Right cardiac atrium (tissue), 5 donors: ENCODE measurements at regions of chr10 and their contacts with region 1.

Region 1: DNA sequence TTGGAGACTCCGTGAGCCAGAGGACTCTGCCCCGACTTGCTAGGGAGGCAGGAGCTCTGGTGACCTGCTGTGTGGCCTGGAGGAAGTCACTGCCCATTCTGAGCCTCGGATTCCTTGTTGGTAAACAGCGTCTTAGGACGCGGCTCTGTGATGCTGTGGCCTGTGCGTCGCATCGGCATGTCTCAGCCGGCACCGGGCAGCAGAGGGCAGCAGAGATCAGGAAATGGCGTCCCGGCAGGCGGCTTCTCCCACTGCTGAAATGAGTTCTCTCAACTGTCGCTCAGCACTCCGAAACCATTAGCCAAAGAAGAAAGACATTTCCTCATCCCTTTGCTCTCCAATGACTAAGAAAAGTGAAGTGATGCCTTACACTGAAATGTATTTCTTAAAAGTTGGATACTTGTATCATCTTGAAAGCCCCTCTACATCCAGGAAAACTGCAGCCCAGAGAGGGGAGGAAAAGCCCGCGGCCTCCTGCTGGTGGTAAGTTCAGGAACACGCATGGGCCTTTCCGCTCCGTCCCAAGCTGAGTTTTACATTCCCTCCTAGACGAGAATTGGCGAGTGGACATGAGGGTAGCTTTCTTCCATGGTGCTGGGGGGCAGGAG is 91.7 kb downstream of the WDR11 start:
- DNase-seq: peak; percentile 81 to 92 (median 92)
- ATAC-seq: peak; percentile 85 to 91
- H3K4me3 ChIP-seq: no peak overlapping the region
- H3K27ac ChIP-seq: no peak overlapping the region
- H3K4me1 ChIP-seq: no peaks in the 10 kb centered on the region
- H3K27me3 ChIP-seq: no peaks in the 10 kb centered on the region

Region 2: DNA sequence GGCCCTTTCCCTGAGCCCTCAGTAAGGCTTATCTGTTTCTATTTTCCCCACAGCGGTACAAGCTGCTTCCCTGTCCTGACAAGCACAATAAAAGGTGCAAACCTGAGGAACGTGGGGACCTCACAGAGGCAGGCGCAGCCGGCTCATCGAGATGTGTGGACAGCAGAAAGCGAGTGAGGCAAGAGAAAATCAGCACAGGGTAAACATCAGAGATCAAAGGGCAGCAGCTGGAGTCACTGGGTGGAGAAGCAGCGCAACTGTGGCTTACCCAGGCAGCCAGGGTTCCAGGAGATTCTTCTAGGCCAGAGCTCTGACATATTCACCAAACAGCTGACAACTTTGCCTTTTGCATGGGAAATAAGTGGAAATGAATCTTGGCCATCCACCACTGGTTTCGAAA is 120.8 kb after region 1 on chr10:
- intact Hi-C with region 1: no loop called
- DNase-seq: no peak
- ATAC-seq: no peak
- H3K4me3 ChIP-seq: no peak overlapping the region
- H3K27ac ChIP-seq: no peak overlapping the region
- H3K4me1 ChIP-seq: no peaks in the 10 kb centered on the region
- H3K27me3 ChIP-seq: no peaks in the 10 kb centered on the region

Region 3: DNA sequence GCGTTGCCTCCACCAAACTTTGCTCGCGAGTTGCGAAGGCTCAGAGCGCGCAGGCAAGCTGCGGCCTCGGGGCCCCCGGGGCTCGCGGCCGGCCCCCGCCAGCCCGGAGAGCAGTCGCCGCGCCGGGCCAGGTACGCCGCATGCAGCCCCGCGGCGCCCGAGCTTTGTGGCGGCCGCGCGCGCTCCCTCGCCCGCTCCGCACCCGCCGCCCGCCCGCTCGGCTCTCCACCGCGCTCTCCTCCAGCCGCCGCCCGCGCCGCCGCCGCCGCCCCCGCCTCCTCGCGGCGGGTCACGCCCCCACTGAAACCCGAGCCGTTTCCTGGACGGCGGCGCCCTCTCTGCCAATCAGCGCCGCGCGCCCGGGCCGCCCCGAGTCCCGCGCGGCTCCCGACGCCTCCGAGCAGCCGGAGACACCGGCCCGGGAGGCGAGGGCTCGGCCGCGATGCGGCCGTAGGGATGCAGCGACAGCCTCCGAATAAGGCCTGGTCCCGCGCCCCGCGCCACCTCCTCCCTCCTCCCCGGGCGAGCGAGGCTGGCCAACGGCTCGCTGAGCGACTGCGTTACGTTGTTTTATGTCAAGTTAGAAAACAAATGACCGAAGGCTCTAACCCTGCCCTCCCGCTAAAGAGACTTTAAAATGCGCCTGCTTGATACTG is 655.4 kb after region 1 on chr10 and contains the start of gene FGFR2:
- intact Hi-C with region 1: loop called in 2 of 4 experiments (anchors 5 to 10 kb)
- DNase-seq: peak; percentile 84 to 93 (median 91)
- ATAC-seq: peak; percentile 96 to 98
- H3K4me3 ChIP-seq: peak within 1 kb of the TSS; percentile 44
- H3K27ac ChIP-seq: peak within 1 kb of the TSS; percentile 78
- H3K4me1 ChIP-seq: peaks cover 3% of the 10 kb centered on the region
- H3K27me3 ChIP-seq: no peaks in the 10 kb centered on the region
- total RNA-seq, gene FGFR2: 4.0 to 20.4 (median 5.6) TPM

Region 4: DNA sequence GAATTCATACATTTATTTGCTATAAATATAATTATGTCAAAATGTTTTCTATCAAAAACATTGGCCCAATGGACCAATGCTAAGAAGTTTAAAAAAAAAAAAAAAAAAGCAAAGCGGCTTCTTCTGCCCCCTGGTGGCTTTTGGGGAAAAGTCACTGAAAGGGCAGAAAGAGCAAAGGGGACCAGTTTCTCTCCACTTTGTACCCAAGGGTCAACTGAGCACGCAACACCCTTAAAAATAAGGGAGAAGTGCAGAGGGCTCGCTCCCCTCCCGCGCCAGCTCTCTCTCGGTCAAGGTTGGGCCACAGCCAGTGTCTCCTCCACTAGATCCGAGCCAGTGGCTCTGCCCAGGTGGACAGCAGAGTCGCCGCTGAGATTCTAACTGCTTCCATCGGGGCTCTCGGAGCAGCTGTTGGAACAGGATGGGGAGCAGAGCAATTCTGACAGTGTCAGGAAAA is 791.7 kb after region 1 on chr10:
- intact Hi-C with region 1: loop called (anchors 5 to 10 kb)
- DNase-seq: peak in 2 of 3 donors; percentile 16 to 52
- ATAC-seq: peak in 1 of 2 donors; percentile 56
- H3K4me3 ChIP-seq: no peak overlapping the region
- H3K27ac ChIP-seq: no peak overlapping the region
- H3K4me1 ChIP-seq: no peaks in the 10 kb centered on the region
- H3K27me3 ChIP-seq: no peaks in the 10 kb centered on the region

Region 5: DNA sequence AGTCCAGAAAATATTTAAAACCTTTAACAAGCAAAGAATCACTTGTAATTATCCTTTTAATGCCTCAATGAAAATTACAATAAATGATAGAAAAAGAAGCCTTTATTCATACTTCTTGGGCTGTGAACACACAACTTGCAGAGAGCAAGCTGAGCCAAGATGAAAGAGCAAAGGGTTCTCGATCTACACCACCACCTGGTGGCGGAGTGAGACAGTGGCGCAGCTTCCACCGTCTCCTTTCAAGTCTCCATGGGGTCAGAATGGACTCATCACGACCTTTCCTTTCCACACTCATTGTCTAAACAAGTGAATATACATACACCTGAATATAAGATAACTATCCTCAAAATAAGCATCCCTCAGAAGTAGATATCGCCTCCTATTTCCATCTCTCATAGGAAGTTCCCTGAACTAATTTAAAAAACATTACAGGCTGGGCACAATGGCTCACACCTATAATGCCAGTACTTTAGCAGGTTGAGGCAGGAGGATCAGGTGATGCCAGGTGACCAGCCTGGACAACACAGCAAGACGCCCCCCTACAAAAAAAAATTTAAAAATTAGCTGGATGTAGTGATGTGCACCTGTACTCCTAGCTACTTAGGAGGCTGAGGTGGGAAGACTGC is 944.2 kb after region 1 on chr10:
- intact Hi-C with region 1: loop called (anchors 5 to 10 kb)
- DNase-seq: peak; percentile 40 to 75 (median 52)
- ATAC-seq: peak; percentile 61 to 77
- H3K4me3 ChIP-seq: no peak overlapping the region
- H3K27ac ChIP-seq: no peak overlapping the region
- H3K4me1 ChIP-seq: no peaks in the 10 kb centered on the region
- H3K27me3 ChIP-seq: no peaks in the 10 kb centered on the region

Region 6: GRCh38 chr10:121899727-121900126 is 956.8 kb after region 1 on chr10:
- intact Hi-C with region 1: loop called in 1 of 4 experiments (anchors 10 kb)
- DNase-seq: no peak
- ATAC-seq: no peak
- H3K4me3 ChIP-seq: no peak overlapping the region
- H3K27ac ChIP-seq: no peak overlapping the region
- H3K4me1 ChIP-seq: no peaks in the 10 kb centered on the region
- H3K27me3 ChIP-seq: no peaks in the 10 kb centered on the region